Activated T-helper 1 cell treated with anti-CD3 and anti-CD28 coated beads, Interleukin-12 subunit alpha, Interleukin-12 subunit beta, Interleukin-2, Interleukin-4 antibody, amounts not matched to agents 30 ng/mL and 10 ng/mL and 1 ng/mL, durations not matched to agents 14 hours and 24 hours and 36 hours (primary cell): ENCODE measurements at regions of chr4 and their contacts with region 1.

Region 1: GRCh38 chr4:56799824-56800756 is 21.4 kb downstream of the SPINK2 start:
- DNase-seq: peak; percentile 73
- H3K4me3 Mint-ChIP-seq: peak overlapping the region; percentile 88
- H3K27ac Mint-ChIP-seq: peak overlapping the region; percentile 49
- H3K4me1 Mint-ChIP-seq: peaks cover 30% of the 10 kb centered on the region
- H3K27me3 Mint-ChIP-seq: peaks cover 13% of the 10 kb centered on the region

Region 2: GRCh38 chr4:56467284-56468096 is 332.6 kb before region 1 on chr4 and contains the start of gene SRP72:
- intact Hi-C with region 1: loop called (anchors 1 kb)
- DNase-seq: peak; percentile 88
- H3K4me3 Mint-ChIP-seq: peak within 1 kb of the TSS; percentile 98
- H3K27ac Mint-ChIP-seq: peak within 1 kb of the TSS; percentile 99
- H3K4me1 Mint-ChIP-seq: peaks cover 60% of the 10 kb centered on the region
- H3K27me3 Mint-ChIP-seq: no peaks in the 10 kb centered on the region
- total RNA-seq, gene SRP72: 199 and 211 TPM in 2 replicates

Region 3: DNA sequence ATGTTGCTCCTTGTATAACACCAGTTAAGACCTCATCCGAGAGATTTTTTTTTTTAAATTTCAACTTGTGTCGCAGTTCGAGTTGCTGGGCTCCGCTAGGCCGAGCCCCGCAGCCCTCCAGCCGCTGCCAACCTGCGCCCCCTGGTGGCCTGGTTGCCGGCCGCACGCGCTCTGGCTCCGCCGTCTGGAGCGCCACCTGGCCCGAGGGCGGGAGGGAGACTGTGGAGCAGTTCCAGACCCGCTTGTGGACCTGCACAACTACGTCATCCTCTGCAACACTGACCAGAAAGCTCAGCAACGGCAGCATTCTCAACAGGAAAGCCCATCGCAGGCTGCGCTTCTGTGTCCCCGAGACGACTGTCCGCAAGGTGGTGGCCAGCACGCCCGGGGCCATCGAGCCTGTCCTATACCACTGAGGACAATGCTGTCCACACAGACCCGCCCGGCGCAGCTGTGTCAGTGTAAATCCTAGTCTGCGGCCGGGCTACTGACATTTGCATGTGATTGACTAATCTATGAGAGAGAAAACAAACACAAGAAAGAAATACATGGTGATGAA is 255.4 kb before region 1 on chr4:
- intact Hi-C with region 1: loop called (anchors 1 kb)
- DNase-seq: peak; percentile 78
- H3K4me3 Mint-ChIP-seq: peak overlapping the region; percentile 68
- H3K27ac Mint-ChIP-seq: no peak overlapping the region
- H3K4me1 Mint-ChIP-seq: peaks cover 24% of the 10 kb centered on the region
- H3K27me3 Mint-ChIP-seq: peaks cover 15% of the 10 kb centered on the region

Region 4: DNA sequence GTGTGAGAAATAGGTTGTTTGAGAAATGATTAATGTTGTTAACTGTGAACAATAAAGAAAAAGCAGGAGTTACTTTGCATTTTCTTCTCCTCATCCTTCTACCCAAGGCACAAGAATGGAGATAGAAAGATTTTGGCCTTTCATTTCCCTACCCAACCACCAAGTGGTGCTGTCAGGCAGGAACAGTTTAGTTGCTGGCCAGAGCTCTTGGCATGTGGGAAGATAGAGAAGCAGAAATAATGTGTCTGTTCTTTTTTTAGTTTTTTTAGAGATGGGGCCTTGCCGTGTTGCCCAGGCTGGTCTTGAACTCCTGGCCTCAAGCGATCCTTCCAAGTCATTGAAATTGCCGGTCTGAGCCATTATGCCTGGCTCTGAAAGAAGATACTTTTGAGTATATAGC is 131.8 kb before region 1 on chr4:
- intact Hi-C with region 1: loop called (anchors 1 kb)
- DNase-seq: no peak
- H3K4me3 Mint-ChIP-seq: no peak overlapping the region
- H3K27ac Mint-ChIP-seq: no peak overlapping the region
- H3K4me1 Mint-ChIP-seq: no peaks in the 10 kb centered on the region
- H3K27me3 Mint-ChIP-seq: peaks cover 28% of the 10 kb centered on the region

Region 5: GRCh38 chr4:56757821-56758411 is 42.2 kb before region 1 on chr4:
- intact Hi-C with region 1: loop called (anchors 1 kb)
- DNase-seq: peak; percentile 70
- H3K4me3 Mint-ChIP-seq: peak overlapping the region; percentile 74
- H3K27ac Mint-ChIP-seq: peak overlapping the region; percentile 98
- H3K4me1 Mint-ChIP-seq: peaks cover 48% of the 10 kb centered on the region
- H3K27me3 Mint-ChIP-seq: peaks cover 2% of the 10 kb centered on the region